ENCODE measurements at regions of chrX and their contacts with region 1.

Region 1: DNA sequence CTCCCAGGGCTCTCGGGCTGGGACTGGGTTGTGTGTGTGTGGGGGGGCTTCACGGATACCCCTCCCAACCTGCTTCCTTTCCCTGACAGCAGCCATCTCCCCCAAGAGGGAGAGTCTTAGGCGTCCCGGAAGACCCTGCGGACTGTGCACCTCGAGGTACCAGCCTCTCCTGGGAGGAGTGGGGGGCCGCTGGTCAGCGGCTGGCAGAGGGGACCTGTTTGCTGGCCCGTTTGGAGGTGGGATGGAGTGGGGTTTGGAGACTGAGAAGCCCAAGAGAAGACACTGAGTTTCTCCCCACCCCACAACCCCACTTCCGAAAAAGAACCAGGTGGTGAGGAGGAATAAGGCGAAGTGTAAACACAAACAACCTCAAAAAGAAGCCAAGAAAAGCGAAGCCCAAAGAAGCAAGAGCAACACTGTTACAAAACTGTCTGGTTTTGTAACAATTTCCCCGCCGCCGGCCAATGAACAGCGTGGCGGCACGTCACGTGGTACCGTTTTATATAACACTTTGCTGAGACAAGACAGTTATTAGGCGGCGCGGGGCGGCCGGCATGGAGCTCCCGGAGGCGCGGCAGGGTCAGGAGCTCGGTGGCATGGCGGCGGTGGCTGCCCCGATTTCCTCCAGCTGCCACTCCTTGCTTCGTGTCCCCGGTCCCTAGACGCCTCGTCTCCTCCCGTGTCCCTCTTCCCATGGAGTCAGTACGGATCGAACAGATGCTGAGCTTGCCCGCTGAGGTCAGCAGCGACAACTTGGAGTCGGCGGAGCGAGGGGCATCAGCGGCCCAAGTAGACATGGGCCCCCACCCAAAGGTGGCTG is at the start of gene LONRF3:
- DNase-seq: peak; percentile 26 to 71 (median 56)
- ATAC-seq: peak; percentile 65
- H3K4me3 ChIP-seq: peak within 1 kb of the TSS; percentile 64
- H3K4me3 Mint-ChIP-seq: peak within 1 kb of the TSS; percentile 86 to 100 (median 92)
- H3K27ac ChIP-seq: peak within 1 kb of the TSS; percentile 74
- H3K27ac Mint-ChIP-seq: peak within 1 kb of the TSS; percentile 38 to 94 (median 90)
- H3K4me1 ChIP-seq: peaks cover 0 to 3% of the 10 kb centered on the region in 2 donors
- H3K4me1 Mint-ChIP-seq: peaks cover 0 to 24% (median 17%) of the 10 kb centered on the region in 7 donors
- H3K27me3 ChIP-seq: no peaks in the 10 kb centered on the region
- H3K27me3 Mint-ChIP-seq: peaks cover 0 to 57% (median 5%) of the 10 kb centered on the region in 5 donors
- total RNA-seq, gene LONRF3: 0.07 to 17.8 (median 11.5) TPM

Region 2: DNA sequence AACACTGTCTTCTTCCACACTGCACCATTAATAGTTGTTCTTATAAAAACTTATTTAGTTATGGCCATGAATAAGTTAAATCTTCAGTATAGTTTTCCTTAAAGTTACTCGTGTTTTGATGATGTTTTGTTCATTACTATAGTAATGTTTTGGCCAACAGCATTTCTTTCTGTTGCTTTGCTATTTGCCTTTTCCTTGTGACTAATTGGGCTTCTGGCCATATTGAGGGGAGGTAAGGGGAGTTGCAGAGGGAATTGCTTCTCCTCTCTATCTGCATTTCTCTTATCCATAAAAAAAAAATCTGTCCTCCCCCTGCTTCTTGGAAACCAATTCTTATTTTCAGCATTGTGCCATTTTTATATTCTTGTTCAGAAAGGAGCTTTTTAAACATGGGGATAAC is 193.4 kb before region 1 on chrX:
- CTCF ChIA-PET with region 1: no interaction called
- POLR2A ChIA-PET with region 1: no interaction called
- intact Hi-C with region 1: no loop called
- DNase-seq: no peak
- ATAC-seq: no peak
- H3K4me3 ChIP-seq: no peak overlapping the region
- H3K4me3 Mint-ChIP-seq: no peak overlapping the region
- H3K27ac ChIP-seq: no peak overlapping the region
- H3K27ac Mint-ChIP-seq: no peak overlapping the region
- H3K4me1 ChIP-seq: no peaks in the 10 kb centered on the region
- H3K4me1 Mint-ChIP-seq: no peaks in the 10 kb centered on the region
- H3K27me3 ChIP-seq: no peaks in the 10 kb centered on the region
- H3K27me3 Mint-ChIP-seq: peaks cover 0 to 4% (median 0%) of the 10 kb centered on the region in 5 donors

Region 3: GRCh38 chrX:118904218-118904617 is 70.1 kb before region 1 on chrX:
- CTCF ChIA-PET with region 1: no interaction called
- POLR2A ChIA-PET with region 1: no interaction called
- intact Hi-C with region 1: no loop called
- DNase-seq: no peak
- ATAC-seq: no peak
- H3K4me3 ChIP-seq: no peak overlapping the region
- H3K4me3 Mint-ChIP-seq: no peak overlapping the region
- H3K27ac ChIP-seq: no peak overlapping the region
- H3K27ac Mint-ChIP-seq: no peak overlapping the region
- H3K4me1 ChIP-seq: no peaks in the 10 kb centered on the region
- H3K4me1 Mint-ChIP-seq: peaks cover 0 to 1% (median 0%) of the 10 kb centered on the region in 7 donors
- H3K27me3 ChIP-seq: no peaks in the 10 kb centered on the region
- H3K27me3 Mint-ChIP-seq: peaks cover 0 to 6% (median 2%) of the 10 kb centered on the region in 5 donors

Region 4: DNA sequence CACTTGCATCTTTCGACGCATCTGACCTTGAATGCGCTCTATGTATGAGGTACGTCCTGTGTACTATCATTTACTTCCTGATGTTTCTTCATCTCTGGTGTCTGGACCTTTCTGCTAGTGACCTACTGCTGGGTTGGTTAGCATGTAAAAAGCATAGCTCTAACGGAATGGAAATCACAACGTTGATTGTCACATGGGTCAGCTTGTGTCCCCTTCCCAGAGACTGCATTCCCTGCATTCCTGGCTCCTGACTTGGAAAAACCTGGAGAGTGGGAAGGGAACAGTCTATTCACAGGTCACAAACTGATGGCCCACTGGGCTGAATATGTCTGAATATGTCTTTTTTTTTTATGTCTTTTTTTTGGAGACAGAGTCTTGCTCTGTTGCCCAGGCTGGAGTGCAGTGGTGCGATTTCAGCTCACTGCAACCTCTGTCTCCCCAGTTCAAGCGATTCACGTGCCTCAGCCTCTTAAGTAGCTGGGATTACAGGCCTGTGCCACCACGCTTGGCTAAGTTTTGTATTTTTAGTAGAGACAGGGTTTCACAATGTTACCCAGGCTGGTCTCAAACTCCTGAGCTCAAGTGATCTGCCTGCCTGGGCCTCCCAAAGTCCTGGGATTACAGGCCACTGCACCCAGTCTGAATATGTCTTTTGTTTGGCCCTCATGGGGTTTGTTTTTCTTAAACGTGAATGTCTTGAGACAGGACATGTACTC is 16.4 kb after region 1 on chrX:
- CTCF ChIA-PET with region 1: interaction called, 3 read pairs
- POLR2A ChIA-PET with region 1: interaction called, 48 read pairs
- intact Hi-C with region 1: loop called in 1 of 2 experiments (anchors 1 kb)
- DNase-seq: no peak
- ATAC-seq: no peak
- H3K4me3 ChIP-seq: no peak overlapping the region
- H3K4me3 Mint-ChIP-seq: no peak overlapping the region
- H3K27ac ChIP-seq: no peak overlapping the region
- H3K27ac Mint-ChIP-seq: peak overlapping the region in 6 of 9 donors; percentile 3 to 94 (median 78)
- H3K4me1 ChIP-seq: peaks cover 0 to 10% of the 10 kb centered on the region in 2 donors
- H3K4me1 Mint-ChIP-seq: peaks cover 7 to 45% (median 41%) of the 10 kb centered on the region in 7 donors
- H3K27me3 ChIP-seq: no peaks in the 10 kb centered on the region
- H3K27me3 Mint-ChIP-seq: no peaks in the 10 kb centered on the region